ENCODE measurements at regions of chr3 and their contacts with region 1.

Region 1: GRCh38 chr3:46549408-46549904 is 16.6 kb downstream of the LRRC2 start:
- DNase-seq: no peak
- ATAC-seq: no peak

Region 2: DNA sequence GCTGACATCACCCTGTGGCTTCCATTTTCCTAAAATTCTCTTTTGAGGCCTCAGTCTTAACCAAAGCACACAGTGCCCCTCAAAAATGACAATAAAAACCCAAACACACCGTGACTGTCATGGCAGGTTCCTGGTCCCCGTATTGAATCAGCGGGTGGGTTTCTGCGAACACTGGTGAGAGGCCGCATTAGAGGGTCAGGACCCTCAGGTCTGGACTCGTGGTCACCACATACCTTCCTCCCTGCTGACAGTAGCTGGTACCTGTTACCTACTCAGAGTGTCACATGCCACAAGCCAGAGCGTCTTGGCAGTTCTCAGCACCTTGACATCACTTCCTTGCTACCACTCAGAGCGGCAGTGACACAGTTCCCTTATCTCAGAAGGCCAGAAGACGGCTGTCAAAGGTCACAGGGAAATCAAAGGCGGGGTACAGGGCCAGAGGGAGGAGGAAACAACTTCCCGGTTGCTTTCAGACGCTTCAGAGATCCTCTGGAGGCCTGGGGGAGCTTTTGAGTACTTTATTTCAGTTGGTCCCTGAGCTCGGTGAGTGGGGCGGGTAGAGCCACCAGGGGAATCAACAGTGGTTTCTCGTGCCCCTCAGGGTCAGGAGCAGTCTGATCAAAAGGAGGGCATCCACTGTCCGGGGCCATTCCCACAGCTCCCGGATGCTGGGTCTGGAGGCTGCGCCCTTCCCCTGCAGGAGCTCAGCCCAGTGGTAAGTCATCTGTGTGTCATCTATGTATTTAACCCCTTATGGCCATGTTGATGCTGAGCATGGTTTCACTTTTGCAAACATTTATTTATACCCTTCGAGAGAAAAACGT is 142.5 kb before region 1 on chr3 and contains the starts of genes CCR5AS and CCRL2:
- intact Hi-C with region 1: no loop called
- DNase-seq: peak; percentile 79 to 93
- ATAC-seq: peak; percentile 82
- total RNA-seq, gene CCRL2: 18.3 to 19.4 TPM

Region 3: GRCh38 chr3:46496741-46497554 is 52.5 kb before region 1 on chr3:
- intact Hi-C with region 1: loop called in 1 of 2 experiments (anchors 10 kb)
- DNase-seq: peak in 1 of 2 donors; percentile 63
- ATAC-seq: no peak

Region 4: GRCh38 chr3:46607603-46608028 is 58.2 kb after region 1 on chr3:
- intact Hi-C with region 1: no loop called
- DNase-seq: no peak
- ATAC-seq: no peak

Measured in left colon (tissue), 2 donors.